ENCODE measurements at regions of chr20 and their contacts with region 1.

Region 1: GRCh38 chr20:45322952-45323383 is 14.9 kb upstream of the MATN4 start:
- DNase-seq: peak; percentile 75
- H3K4me3 ChIP-seq: no peak overlapping the region
- H3K27ac ChIP-seq: no peak overlapping the region
- H3K4me1 ChIP-seq: peaks cover 68% of the 10 kb centered on the region
- CTCF ChIP-seq: peak; percentile 74

Region 2: GRCh38 chr20:45368221-45368980 is 45.4 kb after region 1 on chr20:
- CTCF ChIA-PET with region 1: interaction called, 3 read pairs
- POLR2A ChIA-PET with region 1: interaction called, 4 read pairs
- intact Hi-C with region 1: loop called (anchors 2 kb)
- DNase-seq: peak; percentile 97
- H3K4me3 ChIP-seq: peak overlapping the region; percentile 50
- H3K27ac ChIP-seq: peak overlapping the region; percentile 83
- H3K4me1 ChIP-seq: peaks cover 74% of the 10 kb centered on the region
- CTCF ChIP-seq: no peak

Region 3: DNA sequence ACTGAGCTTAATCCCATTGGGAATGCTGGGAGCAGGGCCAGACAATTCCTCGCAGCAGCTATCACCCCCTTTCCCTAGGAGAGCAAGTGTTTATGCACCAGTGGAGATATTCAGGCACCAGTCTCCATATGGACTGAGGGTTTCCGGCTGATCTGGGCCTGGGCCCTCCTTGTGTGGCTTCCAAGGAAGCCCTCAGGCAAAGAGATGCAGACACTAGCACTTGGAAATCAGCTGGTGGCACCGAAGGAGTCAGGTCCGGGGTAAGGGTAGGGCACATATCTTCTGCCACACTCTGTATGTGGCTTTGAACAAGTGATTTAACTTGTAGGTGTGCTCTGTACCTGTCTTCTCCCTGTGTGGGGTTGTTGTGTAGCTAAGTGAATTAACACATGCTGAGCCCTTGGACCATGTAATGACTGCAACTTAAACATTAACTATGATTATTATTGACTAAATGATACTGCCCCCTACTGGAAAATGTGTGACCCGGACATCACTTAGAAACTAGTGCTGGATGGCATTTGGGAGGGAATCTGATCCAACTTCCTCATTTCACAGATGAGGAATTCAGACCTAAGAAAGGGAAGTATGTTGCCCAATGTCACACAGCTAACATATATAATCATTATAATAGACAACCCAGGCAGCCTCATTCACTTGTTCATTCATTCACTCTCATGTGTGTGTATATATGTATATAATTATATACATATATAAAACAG is 127.3 kb after region 1 on chr20:
- CTCF ChIA-PET with region 1: interaction called, 3 read pairs
- POLR2A ChIA-PET with region 1: no interaction called
- intact Hi-C with region 1: loop called (anchors 5 kb)
- DNase-seq: peak; percentile 79
- H3K4me3 ChIP-seq: no peak overlapping the region
- H3K27ac ChIP-seq: no peak overlapping the region
- H3K4me1 ChIP-seq: peaks cover 11% of the 10 kb centered on the region
- CTCF ChIP-seq: peak; percentile 94

Measured in OCI-LY7 (cell line).